Head of caudate nucleus (tissue), 42 donors: ENCODE measurements at regions of chr1 and their contacts with region 1.

Region 1: DNA sequence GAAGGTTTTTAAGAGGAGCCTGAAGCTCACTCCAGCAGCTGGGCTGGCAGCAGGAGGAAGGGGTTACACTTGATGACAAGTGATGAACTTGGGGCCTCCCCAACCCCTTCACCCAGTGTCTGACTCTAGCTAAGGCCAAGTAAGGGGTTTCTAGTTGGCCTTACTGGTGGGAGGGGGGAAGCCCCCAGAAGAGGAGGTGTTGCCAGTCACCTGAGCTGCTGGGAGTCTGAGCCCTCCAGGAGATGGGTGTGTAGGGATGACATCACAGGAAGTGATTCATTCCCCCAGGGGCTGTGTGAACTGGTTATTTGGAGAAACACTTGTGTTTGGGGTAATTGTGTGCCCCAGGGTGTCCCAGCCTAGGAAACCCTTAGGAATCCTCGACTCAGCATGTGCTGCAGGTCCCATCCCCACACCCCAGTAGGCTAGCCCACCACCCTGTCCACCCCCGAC is 3.1 kb downstream of the PADI1 start:
- DNase-seq: no peak

Region 2: DNA sequence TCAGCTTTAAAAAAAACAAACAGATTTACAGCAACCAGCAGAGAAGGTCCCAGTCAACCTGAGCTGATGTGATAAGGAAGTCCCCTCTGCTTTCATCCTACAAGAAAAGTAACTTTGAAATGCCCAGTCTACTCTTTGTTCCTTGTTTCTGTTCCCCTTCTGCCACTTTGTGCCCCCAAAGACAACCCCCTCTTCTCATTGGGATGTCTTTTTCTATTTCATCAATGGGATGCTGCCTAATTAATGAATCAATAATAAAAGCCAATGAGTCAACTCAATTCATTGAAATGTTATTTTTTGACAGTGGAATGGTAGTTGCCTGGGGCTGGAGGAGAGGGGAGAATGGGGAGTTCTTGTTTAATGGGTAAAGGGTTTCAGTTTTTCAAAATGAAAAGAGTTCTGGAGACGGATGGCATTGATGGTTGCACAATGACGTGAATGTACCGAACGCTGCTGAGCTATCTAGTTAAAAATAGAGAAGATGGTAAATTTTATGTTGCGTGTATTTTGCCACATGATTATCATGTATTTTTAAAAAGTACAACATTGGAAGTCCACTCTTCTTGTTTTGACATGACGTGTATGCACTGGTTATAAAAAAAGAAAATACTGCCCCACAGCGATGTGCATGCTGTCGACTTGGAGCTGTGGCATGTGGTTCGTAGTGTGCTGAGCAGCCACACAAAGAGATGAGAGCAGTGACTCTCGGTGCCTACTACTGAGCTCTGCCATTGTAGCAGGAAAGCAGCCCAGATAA is 66.4 kb before region 1 on chr1:
- intact Hi-C with region 1: loop called (anchors 10 kb)
- DNase-seq: no peak